Activated CD4-positive, alpha-beta T cell treated with anti-CD3 and anti-CD28 coated beads, Interleukin-2, amount 10 ng/mL, durations not matched to agents 7 days and 5 days (primary cell): ENCODE measurements at regions of chr7 and their contacts with region 1.

Region 1: GRCh38 chr7:77331938-77332695 is 84.0 kb downstream of the GSAP start:
- DNase-seq: peak; percentile 63
- H3K4me3 Mint-ChIP-seq: no peak overlapping the region
- H3K27ac Mint-ChIP-seq: no peak overlapping the region
- H3K4me1 Mint-ChIP-seq: peaks cover 46% of the 10 kb centered on the region
- H3K27me3 Mint-ChIP-seq: no peaks in the 10 kb centered on the region

Region 2: GRCh38 chr7:77247206-77247850 is 84.8 kb before region 1 on chr7:
- CTCF ChIA-PET with region 1: interaction called, 10 read pairs
- POLR2A ChIA-PET with region 1: no interaction called
- DNase-seq: peak; percentile 92
- H3K4me3 Mint-ChIP-seq: no peak overlapping the region
- H3K27ac Mint-ChIP-seq: no peak overlapping the region
- H3K4me1 Mint-ChIP-seq: peaks cover 8% of the 10 kb centered on the region
- H3K27me3 Mint-ChIP-seq: peaks cover 2% of the 10 kb centered on the region

Region 3: DNA sequence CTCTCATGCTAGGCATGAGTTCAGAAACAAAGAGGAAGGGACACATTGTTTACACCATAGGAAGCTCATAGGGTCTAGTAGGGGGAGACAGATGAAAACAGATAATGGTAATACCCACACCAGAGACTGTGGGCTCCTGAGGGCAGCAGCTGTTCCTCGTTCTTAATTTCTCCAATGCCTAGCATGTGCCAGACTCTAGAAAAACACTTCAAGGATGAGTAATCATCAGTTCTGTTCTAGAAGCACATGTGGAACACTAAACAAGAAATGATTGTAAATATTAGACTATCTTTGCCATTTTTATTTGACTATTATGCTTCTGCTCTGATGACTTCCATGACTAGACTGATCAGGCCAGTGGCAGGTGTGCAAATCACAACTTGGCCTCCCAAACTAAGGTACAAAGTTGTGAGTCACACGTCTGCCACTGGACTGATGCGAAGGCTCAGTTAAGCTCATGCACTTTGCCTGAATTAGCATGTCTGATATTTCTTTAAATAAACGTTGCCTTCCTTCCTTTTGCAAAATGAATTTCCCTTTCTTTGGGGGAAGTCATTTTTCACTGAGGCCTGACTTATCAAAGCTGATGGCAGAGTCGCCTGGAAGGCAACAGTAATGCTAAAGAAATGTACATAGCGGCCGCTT is 43.3 kb before region 1 on chr7:
- CTCF ChIA-PET with region 1: no interaction called
- POLR2A ChIA-PET with region 1: no interaction called
- DNase-seq: no peak
- H3K4me3 Mint-ChIP-seq: no peak overlapping the region
- H3K27ac Mint-ChIP-seq: no peak overlapping the region
- H3K4me1 Mint-ChIP-seq: no peaks in the 10 kb centered on the region
- H3K27me3 Mint-ChIP-seq: no peaks in the 10 kb centered on the region